Naive thymus-derived CD4-positive, alpha-beta T cell (primary cell): ENCODE measurements at regions of chr7 and their contacts with region 1.

Region 1: DNA sequence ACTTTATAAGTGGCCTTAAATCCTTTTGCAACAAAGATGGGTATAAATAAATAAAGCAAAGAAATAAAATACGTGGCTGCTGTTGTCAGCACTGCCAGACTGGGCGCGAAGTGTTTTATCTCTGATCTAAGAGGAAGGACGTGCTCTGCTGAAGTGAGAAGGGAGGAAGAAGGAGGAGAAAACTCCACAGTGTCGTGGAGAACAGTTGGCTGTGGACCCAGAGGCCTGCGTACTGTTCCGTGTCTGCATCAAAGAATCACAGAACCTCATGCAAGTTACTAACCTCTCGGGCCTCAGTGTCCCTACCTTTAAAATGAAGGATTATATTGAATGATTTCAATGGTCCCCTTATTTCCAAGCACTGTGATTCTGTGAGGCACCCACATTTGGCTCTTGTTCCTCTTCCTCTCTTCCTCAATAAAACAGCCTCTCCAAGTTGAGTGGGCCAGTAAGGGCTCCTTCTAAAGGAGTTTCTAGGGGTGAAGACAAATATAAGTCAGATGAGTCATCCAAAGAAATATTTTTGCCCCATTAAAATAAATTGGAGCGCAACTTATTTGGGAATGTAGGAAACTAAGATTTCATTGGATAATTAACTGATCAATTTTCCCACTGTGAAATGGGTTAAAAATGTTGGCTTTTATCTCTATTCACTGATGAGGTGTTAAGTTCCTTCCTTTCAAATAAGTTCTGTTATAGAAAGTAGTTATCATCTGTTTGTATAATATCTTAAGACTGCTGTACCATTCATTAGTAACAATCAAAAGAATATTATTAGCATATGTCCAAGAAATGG is 126.9 kb upstream of the EFCAB10 start:
- DNase-seq: peak in 4 of 9 donors; percentile 15 to 38 (median 26)
- ATAC-seq: peak; percentile 73
- H3K4me3 ChIP-seq: no peak overlapping the region
- H3K4me3 Mint-ChIP-seq: peak overlapping the region; percentile 1 to 67 (median 26)
- H3K27ac ChIP-seq: no peak overlapping the region
- H3K27ac Mint-ChIP-seq: peak overlapping the region in 6 of 9 donors; percentile 9 to 82 (median 36)
- H3K4me1 ChIP-seq: peaks cover 0 to 14% of the 10 kb centered on the region in 2 donors
- H3K4me1 Mint-ChIP-seq: peaks cover 14 to 29% (median 21%) of the 10 kb centered on the region in 7 donors
- H3K27me3 ChIP-seq: no peaks in the 10 kb centered on the region
- H3K27me3 Mint-ChIP-seq: no peaks in the 10 kb centered on the region

Region 2: GRCh38 chr7:105673367-105674142 is 34.6 kb before region 1 on chr7:
- CTCF ChIA-PET with region 1: no interaction called
- POLR2A ChIA-PET with region 1: no interaction called
- intact Hi-C with region 1: loop called in 1 of 2 experiments (anchors 5 kb)
- DNase-seq: no peak
- ATAC-seq: no peak
- H3K4me3 ChIP-seq: no peak overlapping the region
- H3K4me3 Mint-ChIP-seq: peak overlapping the region in 2 of 10 donors; percentile 4 to 10
- H3K27ac ChIP-seq: no peak overlapping the region
- H3K27ac Mint-ChIP-seq: peak overlapping the region in 8 of 9 donors; percentile 48 to 96 (median 85)
- H3K4me1 ChIP-seq: peaks cover 41 to 42% of the 10 kb centered on the region in 2 donors
- H3K4me1 Mint-ChIP-seq: peaks cover 42 to 73% (median 61%) of the 10 kb centered on the region in 7 donors
- H3K27me3 ChIP-seq: no peaks in the 10 kb centered on the region
- H3K27me3 Mint-ChIP-seq: no peaks in the 10 kb centered on the region

Region 3: GRCh38 chr7:105743351-105744090 is 35.4 kb after region 1 on chr7:
- CTCF ChIA-PET with region 1: interaction called, 3 read pairs
- POLR2A ChIA-PET with region 1: no interaction called
- intact Hi-C with region 1: loop called in 1 of 2 experiments (anchors 5 kb)
- DNase-seq: no peak
- ATAC-seq: peak; percentile 12
- H3K4me3 ChIP-seq: no peak overlapping the region
- H3K4me3 Mint-ChIP-seq: no peak overlapping the region
- H3K27ac ChIP-seq: no peak overlapping the region
- H3K27ac Mint-ChIP-seq: no peak overlapping the region
- H3K4me1 ChIP-seq: no peaks in the 10 kb centered on the region
- H3K4me1 Mint-ChIP-seq: peaks cover 7 to 26% (median 21%) of the 10 kb centered on the region in 7 donors
- H3K27me3 ChIP-seq: no peaks in the 10 kb centered on the region
- H3K27me3 Mint-ChIP-seq: peaks cover 0 to 11% (median 0%) of the 10 kb centered on the region in 5 donors